ENCODE measurements at regions of chr9 and their contacts with region 1.

Region 1: GRCh38 chr9:16202914-16203728 is 650.3 kb downstream of the CCDC171 start:
- DNase-seq: peak; percentile 74
- H3K4me3 ChIP-seq: no peak overlapping the region
- H3K27me3 ChIP-seq: no peaks in the 10 kb centered on the region
- CTCF ChIP-seq: no peak

Region 2: GRCh38 chr9:16012621-16013020 is 190.5 kb before region 1 on chr9:
- CTCF ChIA-PET with region 1: no interaction called
- POLR2A ChIA-PET with region 1: no interaction called
- DNase-seq: no peak
- H3K4me3 ChIP-seq: no peak overlapping the region
- H3K27me3 ChIP-seq: no peaks in the 10 kb centered on the region
- CTCF ChIP-seq: no peak

Region 3: DNA sequence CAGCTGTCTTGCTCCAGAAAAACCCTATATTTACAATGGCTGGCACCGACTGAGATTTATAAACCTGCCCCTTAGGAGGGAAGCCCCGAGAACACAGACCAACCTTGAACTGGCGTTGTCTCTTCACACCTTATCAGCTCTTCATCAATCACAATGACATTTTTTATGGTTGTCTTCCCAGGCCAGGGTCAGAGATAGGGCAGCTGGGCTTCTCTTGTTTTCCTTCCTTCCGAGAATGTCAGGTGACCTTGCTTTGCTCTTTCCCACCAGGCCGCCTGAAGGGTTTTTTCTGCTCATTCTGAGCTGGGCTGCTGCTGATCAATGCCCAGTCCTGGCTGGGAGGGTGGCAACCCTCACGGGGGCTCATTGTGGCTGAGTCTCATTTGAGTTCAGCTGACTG is 31.2 kb before region 1 on chr9:
- CTCF ChIA-PET with region 1: no interaction called
- POLR2A ChIA-PET with region 1: no interaction called
- DNase-seq: no peak
- H3K4me3 ChIP-seq: no peak overlapping the region
- H3K27me3 ChIP-seq: no peaks in the 10 kb centered on the region; the same call in 1 of the 2 replicates
- CTCF ChIP-seq: no peak

Region 4: GRCh38 chr9:16182784-16183183 is 20.3 kb before region 1 on chr9:
- CTCF ChIA-PET with region 1: interaction called, 3 read pairs
- POLR2A ChIA-PET with region 1: interaction called, 11 read pairs
- DNase-seq: no peak
- H3K4me3 ChIP-seq: no peak overlapping the region
- H3K27me3 ChIP-seq: no peaks in the 10 kb centered on the region
- CTCF ChIP-seq: no peak

Region 5: GRCh38 chr9:16414451-16414850 is 211.3 kb after region 1 on chr9:
- CTCF ChIA-PET with region 1: no interaction called
- POLR2A ChIA-PET with region 1: interaction called, 10 read pairs
- DNase-seq: no peak
- H3K4me3 ChIP-seq: no peak overlapping the region
- H3K27me3 ChIP-seq: no peaks in the 10 kb centered on the region
- CTCF ChIP-seq: no peak

Region 6: DNA sequence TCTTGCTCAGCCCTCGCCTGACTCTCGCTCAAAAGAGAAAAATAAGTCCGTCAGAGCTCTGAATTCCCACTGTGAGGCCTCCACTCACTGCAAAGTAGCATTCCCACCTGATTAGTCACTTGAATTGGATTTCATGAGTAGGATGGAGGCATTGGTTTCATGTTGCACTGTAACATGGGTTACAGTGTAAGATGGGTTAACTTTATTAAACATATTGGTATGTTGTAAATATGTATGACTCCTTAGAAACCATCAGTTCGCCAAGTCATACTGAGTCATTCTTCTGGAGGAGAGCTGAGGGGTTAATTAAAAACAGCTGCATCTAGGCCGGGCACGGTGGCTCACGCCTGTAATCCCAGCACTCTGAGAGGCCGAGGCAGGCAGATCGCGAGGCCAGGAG is 761.1 kb after region 1 on chr9:
- CTCF ChIA-PET with region 1: no interaction called
- POLR2A ChIA-PET with region 1: interaction called, 24 read pairs
- DNase-seq: peak; percentile 98
- H3K4me3 ChIP-seq: no peak overlapping the region
- H3K27me3 ChIP-seq: no peaks in the 10 kb centered on the region
- CTCF ChIP-seq: no peak